PC-9 (cell line): ENCODE measurements at regions of chr9 and their contacts with region 1.

Region 1: GRCh38 chr9:94894111-94894699 is 167.7 kb downstream of the AOPEP start:
- DNase-seq: peak in 1 of 2 experiments; percentile 53
- H3K4me3 ChIP-seq: no peak overlapping the region
- H3K27ac ChIP-seq: 0 out of 2 replicates have a peak overlapping the region, but pooled peaks have one; percentile 2
- H3K4me1 ChIP-seq: peaks cover 28% of the 10 kb centered on the region
- H3K27me3 ChIP-seq: no peaks in the 10 kb centered on the region
- CTCF ChIP-seq: no peak

Region 2: DNA sequence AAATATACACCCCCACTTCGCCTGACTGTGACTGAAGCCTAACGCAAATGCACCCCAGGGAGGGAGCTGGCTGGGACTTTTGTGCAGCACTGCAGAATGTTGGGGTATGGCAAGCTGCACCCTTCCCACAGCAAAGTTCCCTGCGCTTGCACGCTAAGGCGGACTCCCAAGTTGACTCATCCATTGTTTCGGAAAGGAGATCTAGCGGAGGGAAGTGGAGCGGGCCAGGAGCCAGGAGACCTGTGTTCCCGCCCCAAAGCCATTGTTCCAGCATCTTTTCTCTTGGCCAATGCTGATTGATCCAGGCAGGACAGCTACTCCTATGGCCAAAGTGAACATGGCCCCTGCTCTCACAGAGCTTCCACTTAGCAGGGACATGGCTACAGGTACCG is 35.2 kb after region 1 on chr9:
- CTCF ChIA-PET with region 1: interaction called, 10 read pairs
- POLR2A ChIA-PET with region 1: no interaction called
- intact Hi-C with region 1: no loop called
- DNase-seq: peak in 1 of 2 experiments; percentile 89
- H3K4me3 ChIP-seq: no peak overlapping the region
- H3K27ac ChIP-seq: no peak overlapping the region
- H3K4me1 ChIP-seq: peaks cover 26% of the 10 kb centered on the region
- H3K27me3 ChIP-seq: no peaks in the 10 kb centered on the region
- CTCF ChIP-seq: no peak